ENCODE measurements at regions of chr2 and their contacts with region 1.

Region 1: GRCh38 chr2:10267551-10268465 is 34.9 kb upstream of the HPCAL1 start:
- DNase-seq: no peak
- ATAC-seq: no peak
- H3K4me3 ChIP-seq: no peak overlapping the region
- H3K4me3 Mint-ChIP-seq: no peak overlapping the region
- H3K27ac ChIP-seq: no peak overlapping the region
- H3K27ac Mint-ChIP-seq: no peak overlapping the region
- H3K4me1 ChIP-seq: peaks cover 10% of the 10 kb centered on the region
- H3K4me1 Mint-ChIP-seq: peaks cover 6% of the 10 kb centered on the region
- H3K27me3 ChIP-seq: no peaks in the 10 kb centered on the region
- H3K27me3 Mint-ChIP-seq: no peaks in the 10 kb centered on the region
- CTCF ChIP-seq: no peak

Region 2: GRCh38 chr2:10302479-10303180 is 34.8 kb after region 1 on chr2 and contains the start of gene HPCAL1:
- CTCF ChIA-PET with region 1: interaction called, 27 read pairs
- POLR2A ChIA-PET with region 1: interaction called, 4 read pairs
- intact Hi-C with region 1: loop called in 1 of 2 experiments (anchors 1 kb)
- DNase-seq: peak; percentile 54 to 90 (median 80)
- ATAC-seq: peak; percentile 67
- H3K4me3 ChIP-seq: peak within 1 kb of the TSS; percentile 84 to 86
- H3K4me3 Mint-ChIP-seq: peak within 1 kb of the TSS; percentile 98
- H3K27ac ChIP-seq: peak within 1 kb of the TSS; percentile 52 to 73
- H3K27ac Mint-ChIP-seq: peak within 1 kb of the TSS; percentile 92
- H3K4me1 ChIP-seq: peaks cover 60% of the 10 kb centered on the region
- H3K4me1 Mint-ChIP-seq: peaks cover 70% of the 10 kb centered on the region
- H3K27me3 ChIP-seq: no peaks in the 10 kb centered on the region
- H3K27me3 Mint-ChIP-seq: no peaks in the 10 kb centered on the region
- CTCF ChIP-seq: peak; percentile 61
- total RNA-seq, gene HPCAL1: 25.0 to 25.6 TPM

Region 3: GRCh38 chr2:10331027-10331701 is 63.4 kb after region 1 on chr2:
- CTCF ChIA-PET with region 1: interaction called, 4 read pairs
- POLR2A ChIA-PET with region 1: no interaction called
- intact Hi-C with region 1: loop called in 1 of 2 experiments (anchors 1 kb)
- DNase-seq: peak; percentile 34 to 85 (median 76)
- ATAC-seq: peak; percentile 56
- H3K4me3 ChIP-seq: peak overlapping the region; percentile 56 to 80
- H3K4me3 Mint-ChIP-seq: peak overlapping the region; percentile 92
- H3K27ac ChIP-seq: peak overlapping the region; percentile 57 to 82
- H3K27ac Mint-ChIP-seq: peak overlapping the region; percentile 97
- H3K4me1 ChIP-seq: peaks cover 75% of the 10 kb centered on the region
- H3K4me1 Mint-ChIP-seq: peaks cover 86% of the 10 kb centered on the region
- H3K27me3 ChIP-seq: no peaks in the 10 kb centered on the region
- H3K27me3 Mint-ChIP-seq: no peaks in the 10 kb centered on the region
- CTCF ChIP-seq: no peak

Region 4: DNA sequence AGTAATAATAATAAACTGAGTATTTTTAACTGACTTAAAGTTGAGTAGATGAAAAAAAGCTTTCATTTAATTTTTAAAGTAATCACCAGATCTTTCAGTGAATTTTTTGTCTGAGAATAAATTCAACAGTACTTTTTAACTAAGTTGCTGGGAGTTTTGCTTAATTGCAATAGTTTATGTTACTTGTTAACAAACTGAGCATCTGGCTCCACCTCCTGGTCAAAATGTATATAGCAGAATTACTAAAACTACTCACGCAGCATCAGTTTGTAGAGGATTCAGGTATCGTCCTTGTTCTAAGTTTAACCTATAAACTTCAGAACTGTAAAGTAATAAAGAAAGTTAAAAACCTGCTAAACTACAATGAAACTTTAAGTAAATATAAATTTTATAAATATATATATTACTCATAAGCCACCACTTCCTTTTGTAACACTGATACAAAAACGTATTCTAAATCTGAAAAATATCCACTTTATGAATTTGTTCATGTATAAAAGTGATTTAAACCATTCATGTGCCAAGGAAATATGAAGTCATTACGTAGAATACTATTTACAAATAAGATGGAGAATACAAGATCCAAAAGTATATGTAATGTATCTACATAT is 400.7 kb after region 1 on chr2:
- CTCF ChIA-PET with region 1: no interaction called
- POLR2A ChIA-PET with region 1: no interaction called
- intact Hi-C with region 1: loop called (anchors 5 to 10 kb)
- DNase-seq: peak in 3 of 9 experiments; percentile 39 to 78 (median 74)
- ATAC-seq: peak; percentile 77
- H3K4me3 ChIP-seq: no peak overlapping the region
- H3K4me3 Mint-ChIP-seq: no peak overlapping the region
- H3K27ac ChIP-seq: no peak overlapping the region
- H3K27ac Mint-ChIP-seq: no peak overlapping the region
- H3K4me1 ChIP-seq: no peaks in the 10 kb centered on the region
- H3K4me1 Mint-ChIP-seq: peaks cover 2% of the 10 kb centered on the region
- H3K27me3 ChIP-seq: no peaks in the 10 kb centered on the region
- H3K27me3 Mint-ChIP-seq: no peaks in the 10 kb centered on the region
- CTCF ChIP-seq: peak; percentile 86

Measured in CD8-positive, alpha-beta T cell (primary cell).